ENCODE measurements at regions of chrX and their contacts with region 1.

Region 1: GRCh38 chrX:14029425-14030173 is at the start of gene GEMIN8:
- DNase-seq: peak; percentile 91 to 95
- H3K4me3 ChIP-seq: peak within 1 kb of the TSS; percentile 58
- H3K4me1 ChIP-seq: peaks cover 31% of the 10 kb centered on the region
- H3K27me3 ChIP-seq: no peaks in the 10 kb centered on the region

Region 2: DNA sequence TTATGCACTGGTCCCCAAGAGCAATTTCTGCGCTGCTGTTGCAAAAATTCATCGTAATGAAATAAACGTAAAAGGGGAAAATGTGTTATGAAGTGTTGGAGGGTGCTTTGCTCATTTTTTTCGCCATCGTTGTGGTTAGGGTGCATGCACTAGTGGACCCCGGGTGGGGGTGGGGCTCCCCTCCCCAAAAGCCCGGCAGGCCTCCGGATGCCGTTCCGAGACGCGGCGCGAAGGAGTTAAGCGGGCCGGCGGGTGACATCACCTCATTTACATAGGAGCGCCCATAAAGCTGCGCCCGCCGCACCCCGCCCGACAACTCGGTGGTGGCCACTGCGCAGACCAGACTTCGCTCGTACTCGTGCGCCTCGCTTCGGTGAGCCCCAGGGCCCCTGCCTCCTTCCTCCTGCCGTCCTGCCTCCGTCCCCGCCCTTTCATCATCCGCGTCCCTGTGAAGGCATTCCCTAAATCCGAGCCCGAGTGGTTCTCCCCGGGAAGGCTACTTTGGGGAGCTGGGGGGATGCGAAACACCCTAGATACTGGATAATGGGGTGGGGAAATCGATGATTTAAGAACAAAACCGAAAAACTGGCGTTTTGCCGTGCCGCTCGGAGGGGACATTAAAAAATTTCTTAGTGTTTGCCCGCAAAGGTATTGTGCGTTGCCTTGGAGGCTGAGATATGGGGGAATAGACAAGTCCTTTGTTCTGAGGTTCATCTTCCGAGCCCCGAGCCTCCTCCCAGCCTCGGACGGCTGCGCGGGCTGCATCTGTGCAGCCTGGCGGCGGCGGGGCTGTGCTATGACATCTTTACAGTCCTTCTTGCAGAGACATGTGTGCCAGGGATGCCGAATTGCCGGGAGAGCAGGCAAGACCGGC is 1054.6 kb before region 1 on chrX and contains the start of gene TMSB4X:
- in situ Hi-C with region 1: loop called (anchors 25 kb)
- DNase-seq: peak; percentile 81 to 93
- H3K4me3 ChIP-seq: peak within 1 kb of the TSS; percentile 92
- H3K4me1 ChIP-seq: peaks cover 50% of the 10 kb centered on the region
- H3K27me3 ChIP-seq: no peaks in the 10 kb centered on the region

Region 3: DNA sequence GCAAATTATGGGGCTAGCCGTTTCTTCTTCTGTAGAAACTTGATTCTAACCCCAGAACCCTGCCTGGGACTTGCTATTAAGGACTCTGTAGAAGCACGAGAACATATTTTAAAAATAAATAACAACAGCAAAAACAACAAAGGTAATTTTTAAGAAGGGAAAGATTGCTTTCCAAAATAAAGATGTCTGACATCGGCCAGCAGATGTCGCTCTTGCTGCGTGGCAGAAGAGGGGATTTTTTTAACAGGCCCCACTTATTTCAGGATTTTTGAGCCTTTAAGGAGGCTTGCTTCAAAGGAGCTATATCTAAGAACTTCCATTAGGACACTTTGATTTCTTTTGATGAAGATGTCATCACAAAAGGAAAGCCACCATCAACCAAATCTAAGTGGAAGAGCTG is 523.0 kb before region 1 on chrX:
- in situ Hi-C with region 1: loop called (anchors 5 kb)
- DNase-seq: peak; percentile 69 to 76
- H3K4me3 ChIP-seq: no peak overlapping the region
- H3K4me1 ChIP-seq: no peaks in the 10 kb centered on the region
- H3K27me3 ChIP-seq: no peaks in the 10 kb centered on the region

Region 4: DNA sequence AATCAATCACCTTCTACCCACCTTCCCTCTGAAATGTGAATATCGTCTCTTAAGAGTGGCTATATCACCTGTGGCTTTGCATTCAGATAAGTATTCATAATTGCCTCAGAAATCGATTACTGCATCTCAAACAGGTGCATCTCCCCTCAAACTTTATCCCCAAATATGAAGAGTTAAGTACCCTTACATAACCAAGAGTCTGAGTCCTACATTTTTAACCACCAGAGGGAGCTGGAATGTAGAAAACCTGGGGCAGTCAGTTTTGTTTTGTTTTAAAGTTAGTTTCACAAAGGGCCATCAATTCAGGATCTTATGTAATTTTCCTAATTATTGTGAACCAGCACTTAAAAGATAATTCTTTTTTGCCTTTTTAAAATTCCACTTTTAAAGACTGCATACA is 371.0 kb before region 1 on chrX:
- in situ Hi-C with region 1: loop called (anchors 5 kb)
- DNase-seq: peak; percentile 26 to 46
- H3K4me3 ChIP-seq: no peak overlapping the region
- H3K4me1 ChIP-seq: peaks cover 5% of the 10 kb centered on the region
- H3K27me3 ChIP-seq: no peaks in the 10 kb centered on the region

Region 5: DNA sequence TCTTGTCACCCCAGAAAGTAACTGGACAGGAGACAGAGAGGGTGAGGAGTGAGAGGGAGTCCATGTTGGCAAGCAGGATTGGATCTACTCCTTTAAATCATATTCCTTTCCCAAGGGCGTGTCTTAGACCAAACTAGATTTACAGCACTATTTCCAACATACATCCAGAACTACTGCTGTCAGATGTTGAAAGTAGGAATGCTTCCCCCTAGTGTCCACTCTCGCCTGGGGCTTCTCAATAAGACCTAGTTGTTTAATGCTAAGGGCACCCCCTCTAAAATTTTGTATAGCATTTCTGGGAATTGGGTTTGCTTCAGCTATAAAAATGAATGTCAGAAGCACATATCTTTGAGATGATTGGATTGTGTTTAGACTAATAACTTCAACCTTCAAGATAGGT is 281.8 kb before region 1 on chrX:
- in situ Hi-C with region 1: loop called (anchors 10 kb)
- DNase-seq: peak; percentile 29 to 55
- H3K4me3 ChIP-seq: no peak overlapping the region
- H3K4me1 ChIP-seq: peaks cover 2% of the 10 kb centered on the region; the same call in 1 of the 2 replicates
- H3K27me3 ChIP-seq: no peaks in the 10 kb centered on the region

Region 6: GRCh38 chrX:13764765-13765164 is 264.8 kb before region 1 on chrX:
- in situ Hi-C with region 1: loop called (anchors 10 kb)
- DNase-seq: peak in 1 of 2 experiments; percentile 50
- H3K4me3 ChIP-seq: no peak overlapping the region
- H3K4me1 ChIP-seq: peaks cover 19% of the 10 kb centered on the region
- H3K27me3 ChIP-seq: no peaks in the 10 kb centered on the region

Region 7: GRCh38 chrX:14173873-14174272 is 144.3 kb after region 1 on chrX:
- in situ Hi-C with region 1: no loop called
- DNase-seq: no peak
- H3K4me3 ChIP-seq: no peak overlapping the region
- H3K4me1 ChIP-seq: no peaks in the 10 kb centered on the region
- H3K27me3 ChIP-seq: no peaks in the 10 kb centered on the region; the same call in 1 of the 2 replicates

Measured in HAP-1 (cell line).